ENCODE measurements at regions of chr9 and their contacts with region 1.

Region 1: DNA sequence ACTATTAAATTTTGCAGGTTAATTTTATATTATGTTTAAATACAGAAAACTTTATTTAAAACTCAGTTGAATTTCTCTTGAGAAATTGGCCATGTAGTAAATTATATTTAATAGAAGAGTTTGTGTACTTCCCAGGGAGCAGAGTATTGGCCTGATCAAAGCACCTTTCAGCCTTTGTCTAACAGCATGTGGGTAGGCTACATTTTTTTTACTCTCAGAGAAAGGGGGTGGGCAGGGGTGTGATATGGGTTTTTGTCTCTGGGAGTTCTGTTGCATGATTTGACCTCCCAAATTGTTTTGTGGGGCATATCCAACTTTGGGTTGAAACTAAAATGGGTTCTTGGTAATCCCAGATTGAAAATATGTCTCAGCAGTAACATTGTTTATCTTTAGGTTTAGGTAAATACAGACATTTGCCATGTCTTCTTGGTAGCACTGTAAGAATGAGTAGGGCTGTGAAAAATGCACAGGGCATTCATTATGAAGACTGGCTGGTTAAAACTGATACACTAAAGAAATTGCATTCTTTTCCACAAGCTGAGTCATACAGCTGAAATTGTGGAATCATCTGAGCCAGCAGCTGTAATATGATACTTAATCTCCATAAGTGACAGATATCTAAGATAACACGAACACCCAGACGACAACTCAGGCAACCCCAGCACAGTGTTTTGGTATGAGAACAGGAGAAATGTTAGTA is 75.4 kb upstream of the CDKN2B start:
- DNase-seq: peak; percentile 42 to 96
- H3K4me3 ChIP-seq: peak overlapping the region; percentile 43; the same call in 1 of the 2 replicates
- H3K27ac ChIP-seq: peak overlapping the region; percentile 100
- H3K4me1 ChIP-seq: peaks cover 54% of the 10 kb centered on the region
- H3K27me3 ChIP-seq: no peaks in the 10 kb centered on the region
- CTCF ChIP-seq: no peak

Region 2: DNA sequence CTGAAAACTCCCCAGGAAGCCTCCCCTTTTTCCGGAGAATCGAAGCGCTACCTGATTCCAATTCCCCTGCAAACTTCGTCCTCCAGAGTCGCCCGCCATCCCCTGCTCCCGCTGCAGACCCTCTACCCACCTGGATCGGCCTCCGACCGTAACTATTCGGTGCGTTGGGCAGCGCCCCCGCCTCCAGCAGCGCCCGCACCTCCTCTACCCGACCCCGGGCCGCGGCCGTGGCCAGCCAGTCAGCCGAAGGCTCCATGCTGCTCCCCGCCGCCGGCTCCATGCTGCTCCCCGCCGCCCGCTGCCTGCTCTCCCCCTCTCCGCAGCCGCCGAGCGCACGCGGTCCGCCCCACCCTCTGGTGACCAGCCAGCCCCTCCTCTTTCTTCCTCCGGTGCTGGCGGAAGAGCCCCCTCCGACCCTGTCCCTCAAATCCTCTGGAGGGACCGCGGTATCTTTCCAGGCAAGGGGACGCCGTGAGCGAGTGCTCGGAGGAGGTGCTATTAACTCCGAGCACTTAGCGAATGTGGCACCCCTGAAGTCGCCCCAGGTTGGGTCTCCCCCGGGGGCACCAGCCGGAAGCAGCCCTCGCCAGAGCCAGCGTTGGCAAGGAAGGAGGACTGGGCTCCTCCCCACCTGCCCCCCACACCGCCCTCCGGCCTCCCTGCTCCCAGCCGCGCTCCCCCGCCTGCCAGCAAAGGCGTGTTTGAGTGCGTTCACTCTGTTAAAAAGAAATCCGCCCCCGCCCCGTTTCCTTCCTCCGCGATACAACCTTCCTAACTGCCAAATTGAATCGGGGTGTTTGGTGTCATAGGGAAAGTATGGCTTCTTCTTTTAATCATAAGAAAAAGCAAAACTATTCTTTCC is 109.7 kb before region 1 on chr9:
- CTCF ChIA-PET with region 1: no interaction called
- POLR2A ChIA-PET with region 1: interaction called, 4 read pairs
- intact Hi-C with region 1: loop called (anchors 1 kb)
- DNase-seq: peak; percentile 72 to 82
- H3K4me3 ChIP-seq: peak overlapping the region; percentile 65
- H3K27ac ChIP-seq: peak overlapping the region; percentile 75
- H3K4me1 ChIP-seq: peaks cover 31% of the 10 kb centered on the region
- H3K27me3 ChIP-seq: no peaks in the 10 kb centered on the region
- CTCF ChIP-seq: no peak

Region 3: DNA sequence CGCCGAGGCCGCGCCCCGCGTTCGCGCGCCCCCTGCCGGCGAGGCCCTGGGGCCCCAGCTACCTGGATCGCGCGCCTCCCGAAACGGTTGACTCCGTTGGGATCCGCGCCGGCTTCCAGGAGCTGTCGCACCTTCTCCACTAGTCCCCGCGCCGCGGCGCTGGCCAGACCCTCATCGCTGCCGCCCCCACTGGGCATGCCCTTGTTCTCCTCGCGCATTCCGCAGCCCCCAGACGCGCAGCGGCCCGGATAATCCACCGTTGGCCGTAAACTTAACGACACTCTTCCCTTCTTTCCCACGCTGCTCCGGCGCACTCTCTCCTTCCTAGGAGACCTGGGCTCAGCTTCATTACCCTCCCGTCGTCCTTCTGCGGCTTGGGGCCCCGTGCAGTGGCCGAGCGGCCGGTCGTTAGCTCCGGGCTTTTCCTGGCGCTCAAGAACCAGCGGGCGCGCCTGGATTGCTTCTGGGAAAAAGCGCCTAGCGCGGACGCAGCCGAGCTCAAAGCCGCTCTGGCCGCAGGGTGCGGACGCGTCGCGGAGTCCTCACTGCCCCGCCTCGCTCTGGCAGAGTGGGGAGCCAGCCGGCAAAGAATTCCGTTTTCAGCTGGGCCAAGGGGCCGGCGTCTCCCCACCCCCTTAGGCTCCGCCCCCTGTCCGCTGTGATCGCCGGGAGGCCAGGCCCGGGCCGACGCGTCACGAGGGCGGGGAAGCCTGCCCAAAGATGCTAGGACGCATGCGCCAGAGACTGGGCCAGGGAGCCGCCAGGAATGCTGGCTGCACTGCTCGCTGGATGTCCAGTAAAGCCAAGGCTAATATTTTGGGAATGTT is 75.5 kb before region 1 on chr9 and contains the start of gene CDKN2B:
- CTCF ChIA-PET with region 1: no interaction called
- POLR2A ChIA-PET with region 1: no interaction called
- intact Hi-C with region 1: loop called (anchors 2 kb)
- DNase-seq: peak; percentile 86 to 94
- H3K4me3 ChIP-seq: peak within 1 kb of the TSS; percentile 100
- H3K27ac ChIP-seq: peak within 1 kb of the TSS; percentile 92
- H3K4me1 ChIP-seq: peaks cover 29% of the 10 kb centered on the region
- H3K27me3 ChIP-seq: no peaks in the 10 kb centered on the region
- CTCF ChIP-seq: peak; percentile 82
- total RNA-seq, gene CDKN2B: 33.8 and 40.2 TPM in 2 replicates

Region 4: DNA sequence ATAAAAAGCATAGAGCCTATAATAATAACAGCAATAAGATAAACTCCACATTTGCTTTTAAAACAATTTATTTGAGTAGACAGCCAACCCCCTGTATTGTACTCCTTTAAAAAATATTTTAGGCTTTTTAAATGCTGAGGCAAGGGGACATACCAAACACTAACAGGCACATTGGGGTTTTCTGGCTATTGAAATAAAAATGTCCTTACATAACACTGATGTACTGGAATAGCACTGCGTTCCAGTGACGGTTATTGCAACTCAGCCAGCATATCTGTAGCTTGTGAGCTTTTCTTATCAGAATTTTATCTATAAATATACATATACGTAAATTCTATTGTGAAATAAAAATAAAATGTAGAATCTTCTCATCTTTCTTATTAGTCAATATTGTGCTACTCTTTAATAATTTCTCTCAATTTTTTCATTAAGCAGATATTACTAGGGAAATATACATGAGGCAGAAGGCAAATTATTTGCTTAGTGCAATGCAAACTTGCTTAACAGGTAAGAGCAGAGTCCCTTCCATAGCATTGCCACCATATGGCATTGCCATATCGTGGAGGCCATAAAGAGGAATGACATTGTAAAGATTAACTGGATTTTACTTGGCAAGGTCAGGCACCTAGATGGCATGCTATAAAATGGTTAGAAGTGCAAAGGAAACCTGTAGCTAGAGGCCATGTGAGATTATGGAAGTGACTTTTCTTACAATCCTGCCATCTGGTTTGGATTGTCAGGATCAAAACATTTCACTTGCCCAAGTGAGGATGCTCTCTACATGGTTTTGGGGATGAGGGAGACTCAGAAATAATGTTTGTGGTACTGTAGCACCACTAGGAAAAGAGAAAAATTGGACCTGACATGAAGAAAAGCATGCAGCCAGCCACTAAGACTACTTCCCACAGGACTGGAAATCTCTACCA is 19.4 kb after region 1 on chr9:
- CTCF ChIA-PET with region 1: no interaction called
- POLR2A ChIA-PET with region 1: no interaction called
- intact Hi-C with region 1: loop called (anchors 1 kb)
- DNase-seq: peak in 1 of 2 experiments; percentile 51
- H3K4me3 ChIP-seq: peak overlapping the region; percentile 18; the same call in 1 of the 2 replicates
- H3K27ac ChIP-seq: peak overlapping the region; percentile 94
- H3K4me1 ChIP-seq: peaks cover 53% of the 10 kb centered on the region
- H3K27me3 ChIP-seq: no peaks in the 10 kb centered on the region
- CTCF ChIP-seq: no peak

Region 5: DNA sequence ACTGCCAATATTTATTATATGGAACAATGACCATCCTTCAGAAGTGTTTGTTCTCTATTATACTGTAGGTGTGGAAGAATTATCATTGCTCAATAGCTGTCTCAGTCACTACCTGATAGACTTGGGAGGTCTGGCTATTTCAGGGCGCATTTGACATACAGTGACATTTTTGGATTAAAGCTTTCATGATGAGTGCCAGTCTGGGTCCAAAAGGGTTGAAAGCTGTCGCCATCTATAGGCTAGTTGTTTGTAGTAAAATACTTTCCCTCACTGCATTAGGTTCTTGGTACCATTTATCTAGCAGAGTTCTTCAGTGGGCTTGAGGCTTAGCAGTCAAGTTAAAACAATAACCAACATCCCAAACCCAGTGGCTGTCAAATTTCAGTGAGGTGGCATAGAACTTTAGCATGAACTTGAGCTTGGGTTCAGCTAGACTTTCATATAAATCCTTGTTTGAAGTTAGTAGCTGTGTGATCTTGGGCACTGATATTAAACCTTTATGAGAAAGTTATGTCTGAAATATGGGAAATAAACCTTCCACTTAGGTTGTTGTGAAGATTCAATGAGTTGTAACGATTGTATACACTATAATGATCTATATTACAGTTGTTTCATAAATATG is 35.2 kb after region 1 on chr9:
- CTCF ChIA-PET with region 1: interaction called, 3 read pairs
- POLR2A ChIA-PET with region 1: no interaction called
- intact Hi-C with region 1: loop called (anchors 1 kb)
- DNase-seq: no peak
- H3K4me3 ChIP-seq: no peak overlapping the region
- H3K27ac ChIP-seq: no peak overlapping the region
- H3K4me1 ChIP-seq: peaks cover 15% of the 10 kb centered on the region; the same call in 1 of the 2 replicates
- H3K27me3 ChIP-seq: no peaks in the 10 kb centered on the region
- CTCF ChIP-seq: peak; percentile 25; the same call in 1 of the 2 replicates

Region 6: DNA sequence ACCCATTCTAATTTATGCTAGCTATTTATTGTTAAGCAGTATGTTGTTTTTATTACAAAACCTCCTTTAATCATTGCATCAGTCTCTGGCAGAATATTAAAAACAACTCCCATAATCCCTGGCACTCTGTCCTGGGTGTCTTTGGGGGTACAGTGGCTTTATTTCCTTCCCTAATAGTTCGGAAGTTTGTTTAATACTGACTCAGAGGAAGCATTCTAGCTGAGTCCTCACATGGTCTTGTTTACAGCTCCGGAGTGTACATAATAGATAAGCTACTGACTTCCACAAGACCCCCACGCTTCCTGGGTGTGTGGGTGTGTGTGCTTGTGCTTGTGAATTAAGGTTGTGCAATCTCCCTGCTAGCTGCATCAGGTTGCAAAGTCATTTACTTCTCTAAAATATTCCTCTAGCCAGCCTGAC is 74.5 kb after region 1 on chr9:
- CTCF ChIA-PET with region 1: interaction called, 5 read pairs
- POLR2A ChIA-PET with region 1: no interaction called
- intact Hi-C with region 1: loop called (anchors 2 kb)
- DNase-seq: peak; percentile 41 to 96
- H3K4me3 ChIP-seq: no peak overlapping the region
- H3K27ac ChIP-seq: peak overlapping the region; percentile 99
- H3K4me1 ChIP-seq: peaks cover 47% of the 10 kb centered on the region
- H3K27me3 ChIP-seq: no peaks in the 10 kb centered on the region
- CTCF ChIP-seq: no peak